ENCODE measurements at regions of chr5 and their contacts with region 1.

Region 1: GRCh38 chr5:119397518-119398380 is 41.9 kb downstream of the TNFAIP8 start:
- DNase-seq: peak; percentile 81
- ATAC-seq: peak; percentile 73
- H3K4me3 ChIP-seq: 0 out of 2 replicates have a peak overlapping the region, but pooled peaks have one; percentile 1
- H3K27ac ChIP-seq: peak overlapping the region; percentile 83
- H3K4me1 ChIP-seq: peaks cover 65% of the 10 kb centered on the region
- H3K27me3 ChIP-seq: no peaks in the 10 kb centered on the region
- CTCF ChIP-seq: no peak
- EP300 ChIP-seq: peak; percentile 93 to 94
- POLR2A ChIP-seq: no peak
- RAD21 ChIP-seq: no peak

Region 2: GRCh38 chr5:119070828-119071572 is 326.7 kb before region 1 on chr5 and contains the start of gene DMXL1:
- CTCF ChIA-PET with region 1: interaction called, 3 read pairs
- POLR2A ChIA-PET with region 1: no interaction called
- RAD21 ChIA-PET with region 1: interaction called, 3 read pairs
- SMC1A ChIA-PET with region 1: no interaction called
- in situ Hi-C with region 1: no loop called
- intact Hi-C with region 1: loop called (anchors 5 kb)
- DNase-seq: peak; percentile 99
- ATAC-seq: peak; percentile 84
- H3K4me3 ChIP-seq: peak within 1 kb of the TSS; percentile 79
- H3K27ac ChIP-seq: peak within 1 kb of the TSS; percentile 91
- H3K4me1 ChIP-seq: peaks cover 5% of the 10 kb centered on the region
- H3K27me3 ChIP-seq: no peaks in the 10 kb centered on the region
- CTCF ChIP-seq: no peak
- EP300 ChIP-seq: 0 out of 4 replicates have a peak, but pooled peaks of 1 of the 2 experiments have one; percentile 8
- POLR2A ChIP-seq: peak; percentile 91
- RAD21 ChIP-seq: no peak
- polyA plus RNA-seq, gene DMXL1: 9.1 to 11.0 TPM

Region 3: DNA sequence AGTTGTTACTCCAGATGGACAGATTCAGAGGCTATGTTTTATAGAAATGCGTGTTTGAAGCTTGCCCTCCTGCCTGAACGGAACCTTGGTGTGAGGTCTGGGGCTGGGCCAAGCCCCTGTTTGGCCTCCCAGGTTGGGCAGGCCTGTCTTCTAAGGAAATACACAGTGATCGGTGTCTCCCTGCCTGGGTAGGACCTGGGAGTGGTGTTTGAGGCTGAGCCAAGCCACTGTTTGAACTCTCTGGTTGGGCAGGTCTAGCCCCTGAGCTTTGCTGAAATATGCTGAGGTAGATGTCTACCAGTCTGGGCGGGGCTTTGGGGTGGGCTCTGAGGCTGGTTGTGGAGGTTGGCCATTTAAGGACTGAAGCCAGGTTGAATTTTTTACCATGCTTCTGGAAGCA is 236.3 kb before region 1 on chr5:
- CTCF ChIA-PET with region 1: no interaction called
- POLR2A ChIA-PET with region 1: no interaction called
- RAD21 ChIA-PET with region 1: no interaction called
- SMC1A ChIA-PET with region 1: no interaction called
- in situ Hi-C with region 1: no loop called
- intact Hi-C with region 1: no loop called
- DNase-seq: no peak
- ATAC-seq: no peak
- H3K4me3 ChIP-seq: no peak overlapping the region
- H3K27ac ChIP-seq: no peak overlapping the region
- H3K4me1 ChIP-seq: no peaks in the 10 kb centered on the region
- H3K27me3 ChIP-seq: no peaks in the 10 kb centered on the region
- CTCF ChIP-seq: no peak
- EP300 ChIP-seq: no peak
- POLR2A ChIP-seq: no peak
- RAD21 ChIP-seq: no peak

Region 4: GRCh38 chr5:119274767-119275130 is 123.0 kb before region 1 on chr5:
- CTCF ChIA-PET with region 1: interaction called, 3 read pairs
- POLR2A ChIA-PET with region 1: interaction called, 4 read pairs
- RAD21 ChIA-PET with region 1: no interaction called
- SMC1A ChIA-PET with region 1: interaction called, 8 read pairs
- in situ Hi-C with region 1: no loop called
- intact Hi-C with region 1: loop called (anchors 5 kb)
- DNase-seq: no peak
- ATAC-seq: peak; percentile 23
- H3K4me3 ChIP-seq: peak overlapping the region; percentile 65; the same call in 1 of the 2 replicates
- H3K27ac ChIP-seq: peak overlapping the region; percentile 77
- H3K4me1 ChIP-seq: peaks cover 66% of the 10 kb centered on the region
- H3K27me3 ChIP-seq: no peaks in the 10 kb centered on the region
- CTCF ChIP-seq: no peak
- EP300 ChIP-seq: no peak
- POLR2A ChIP-seq: no peak
- RAD21 ChIP-seq: no peak

Region 5: DNA sequence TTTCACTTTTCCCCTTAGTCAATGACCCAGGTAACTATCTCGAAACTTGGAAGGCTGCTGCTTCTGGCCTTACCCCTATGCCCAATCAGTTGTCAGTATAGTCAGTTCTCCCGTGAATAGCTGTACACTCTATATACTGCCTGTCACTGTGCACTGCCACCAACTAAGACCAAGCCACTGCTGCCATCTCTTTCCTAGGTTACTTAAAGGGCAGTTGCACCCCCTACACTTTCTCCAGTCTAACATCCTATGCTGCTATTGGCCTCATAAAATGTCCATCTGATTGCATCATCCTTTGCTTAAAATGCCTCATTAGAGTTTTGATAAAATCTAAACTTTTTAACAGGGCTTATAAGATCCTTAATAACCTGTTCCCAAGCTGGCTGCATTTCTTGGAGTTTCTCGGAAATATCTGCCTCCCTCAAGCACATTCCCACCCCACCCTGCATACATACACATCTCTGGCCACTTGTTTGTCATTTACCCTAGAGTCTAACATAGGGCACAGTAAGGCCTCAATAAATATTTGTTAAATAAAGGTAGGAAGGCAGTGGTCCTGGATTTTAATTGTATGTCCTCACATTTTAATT is 74.7 kb before region 1 on chr5:
- CTCF ChIA-PET with region 1: interaction called, 10 read pairs
- POLR2A ChIA-PET with region 1: interaction called, 3 read pairs
- RAD21 ChIA-PET with region 1: interaction called, 3 read pairs
- SMC1A ChIA-PET with region 1: interaction called, 583 read pairs
- in situ Hi-C with region 1: loop called (anchors 5 kb)
- intact Hi-C with region 1: no loop called
- DNase-seq: no peak
- ATAC-seq: peak; percentile 64
- H3K4me3 ChIP-seq: peak overlapping the region; percentile 26; the same call in 1 of the 2 replicates
- H3K27ac ChIP-seq: peak overlapping the region; percentile 87
- H3K4me1 ChIP-seq: peaks cover 52% of the 10 kb centered on the region
- H3K27me3 ChIP-seq: no peaks in the 10 kb centered on the region
- CTCF ChIP-seq: no peak
- EP300 ChIP-seq: no peak
- POLR2A ChIP-seq: no peak
- RAD21 ChIP-seq: no peak

Region 6: DNA sequence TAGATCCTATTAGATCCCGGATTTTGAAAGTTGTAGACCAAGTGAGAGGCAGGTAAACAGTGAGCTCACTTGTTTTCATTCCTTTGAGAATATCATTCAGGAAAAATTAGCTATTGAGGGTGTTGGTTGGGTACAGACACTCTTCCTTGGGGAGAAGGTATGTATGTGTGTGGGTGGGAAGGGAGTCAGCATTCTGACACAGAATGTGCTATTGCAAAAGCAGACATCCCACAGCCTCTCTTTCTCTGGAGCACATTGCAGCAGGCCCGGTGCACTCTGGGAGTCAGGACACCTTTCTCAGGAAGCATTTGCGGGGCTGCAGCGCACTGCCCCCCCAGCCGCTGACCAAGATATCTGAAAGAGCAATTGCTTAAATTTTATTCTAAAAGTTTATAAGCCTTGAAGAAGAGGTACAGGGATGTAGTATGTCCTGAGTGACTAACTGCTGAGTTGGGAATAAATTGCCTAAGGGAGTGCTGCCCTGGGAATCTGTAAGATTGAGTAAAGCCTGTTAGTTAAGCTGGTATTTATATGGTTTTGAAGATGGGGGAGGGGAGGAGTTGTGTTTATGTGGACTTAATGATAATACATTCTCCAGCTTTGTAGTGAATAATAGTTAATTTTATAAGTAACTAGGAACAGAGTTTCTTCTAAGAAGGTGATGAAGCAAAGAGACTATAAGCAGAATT is 36.7 kb before region 1 on chr5:
- CTCF ChIA-PET with region 1: interaction called, 5 read pairs
- POLR2A ChIA-PET with region 1: interaction called, 10 read pairs
- RAD21 ChIA-PET with region 1: interaction called, 11 read pairs
- SMC1A ChIA-PET with region 1: interaction called, 10 read pairs
- in situ Hi-C with region 1: no loop called
- intact Hi-C with region 1: loop called (anchors 2 kb)
- DNase-seq: no peak
- ATAC-seq: no peak
- H3K4me3 ChIP-seq: peak overlapping the region; percentile 96
- H3K27ac ChIP-seq: peak overlapping the region; percentile 3; the same call in 1 of the 2 replicates
- H3K4me1 ChIP-seq: peaks cover 50% of the 10 kb centered on the region
- H3K27me3 ChIP-seq: no peaks in the 10 kb centered on the region
- CTCF ChIP-seq: no peak
- EP300 ChIP-seq: no peak
- POLR2A ChIP-seq: no peak
- RAD21 ChIP-seq: no peak

Region 7: DNA sequence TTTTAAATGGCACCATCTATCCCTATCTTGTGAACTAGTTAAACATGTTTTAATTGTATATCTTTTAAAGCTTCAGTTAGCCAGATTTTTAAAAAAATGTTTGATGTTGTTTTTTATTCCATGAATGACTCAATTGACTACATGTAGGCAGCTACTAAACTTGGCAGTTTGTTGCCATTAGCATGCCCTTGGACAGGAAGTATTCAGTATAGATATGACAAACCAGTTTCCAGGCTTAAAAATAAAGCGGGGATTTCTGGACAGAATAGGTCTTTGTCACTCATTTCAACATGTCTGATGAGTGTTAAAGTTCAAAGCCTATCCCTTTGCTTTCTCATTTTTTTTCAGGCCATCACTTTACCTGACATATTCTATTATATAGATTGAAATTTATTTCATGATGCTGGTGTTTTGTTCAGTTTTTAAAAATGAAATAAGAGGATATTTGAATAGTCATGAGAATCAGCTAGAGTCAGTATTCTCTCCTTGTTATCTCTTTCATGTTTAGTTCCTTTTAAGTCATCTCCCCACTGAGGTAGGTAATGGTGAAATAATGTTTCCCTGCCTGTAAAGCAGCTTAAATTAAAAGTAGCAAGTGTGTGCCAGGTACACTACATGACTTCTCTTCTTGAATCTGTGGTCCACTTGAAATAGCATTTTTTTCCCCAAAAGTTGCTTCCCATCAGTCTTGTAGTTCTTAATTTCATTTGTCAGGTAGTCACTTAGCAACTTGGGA is 30.1 kb before region 1 on chr5:
- CTCF ChIA-PET with region 1: interaction called, 14 read pairs
- POLR2A ChIA-PET with region 1: interaction called, 7 read pairs
- RAD21 ChIA-PET with region 1: interaction called, 11 read pairs
- SMC1A ChIA-PET with region 1: interaction called, 7 read pairs
- in situ Hi-C with region 1: no loop called
- intact Hi-C with region 1: loop called (anchors 2 kb)
- DNase-seq: peak; percentile 81
- ATAC-seq: peak; percentile 72
- H3K4me3 ChIP-seq: peak overlapping the region; percentile 59
- H3K27ac ChIP-seq: peak overlapping the region; percentile 95
- H3K4me1 ChIP-seq: peaks cover 44% of the 10 kb centered on the region
- H3K27me3 ChIP-seq: no peaks in the 10 kb centered on the region
- CTCF ChIP-seq: no peak
- EP300 ChIP-seq: peak; percentile 92 to 95
- POLR2A ChIP-seq: no peak
- RAD21 ChIP-seq: 0 out of 2 replicates have a peak, but pooled peaks have one; percentile 8

Region 8: DNA sequence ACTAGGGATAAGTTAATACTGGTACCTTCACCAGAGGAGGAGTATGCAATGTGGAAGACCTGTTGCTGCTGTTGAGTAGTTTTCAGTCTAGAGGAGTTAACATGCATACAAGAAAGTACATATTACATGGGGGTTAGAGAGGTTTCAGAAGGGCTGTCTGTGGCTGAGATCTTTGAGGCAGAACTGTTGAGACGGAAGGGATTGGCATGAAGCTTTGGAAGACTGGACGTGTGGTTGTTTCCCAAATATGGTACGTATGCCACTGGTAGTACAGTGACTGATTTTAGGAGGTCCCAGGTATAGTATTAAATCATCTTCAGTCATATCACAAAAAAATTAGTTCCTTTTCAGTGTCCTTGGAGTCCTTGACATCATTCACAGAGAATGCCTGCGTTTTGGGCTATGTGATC is 24.3 kb before region 1 on chr5:
- CTCF ChIA-PET with region 1: interaction called, 14 read pairs
- POLR2A ChIA-PET with region 1: interaction called, 17 read pairs
- RAD21 ChIA-PET with region 1: interaction called, 4 read pairs
- SMC1A ChIA-PET with region 1: interaction called, 20 read pairs
- in situ Hi-C with region 1: no loop called
- intact Hi-C with region 1: no loop called
- DNase-seq: peak; percentile 65
- ATAC-seq: peak; percentile 80
- H3K4me3 ChIP-seq: no peak overlapping the region
- H3K27ac ChIP-seq: peak overlapping the region; percentile 40; the same call in 1 of the 2 replicates
- H3K4me1 ChIP-seq: peaks cover 16% of the 10 kb centered on the region
- H3K27me3 ChIP-seq: no peaks in the 10 kb centered on the region
- CTCF ChIP-seq: no peak
- EP300 ChIP-seq: no peak
- POLR2A ChIP-seq: no peak
- RAD21 ChIP-seq: no peak

Measured in GM12878 (cell line).